A673 (cell line): ENCODE measurements at regions of chr5 and their contacts with region 1.

Region 1: GRCh38 chr5:41182666-41183065 is 30.7 kb downstream of the C6 start:
- DNase-seq: no peak
- H3K4me3 ChIP-seq: no peak overlapping the region
- H3K27ac ChIP-seq: no peak overlapping the region
- H3K4me1 ChIP-seq: peaks cover 9% of the 10 kb centered on the region
- H3K27me3 ChIP-seq: no peaks in the 10 kb centered on the region
- CTCF ChIP-seq: no peak

Region 2: GRCh38 chr5:40781843-40782409 is 400.7 kb before region 1 on chr5:
- CTCF ChIA-PET with region 1: no interaction called
- POLR2A ChIA-PET with region 1: no interaction called
- intact Hi-C with region 1: no loop called
- DNase-seq: no peak
- H3K4me3 ChIP-seq: no peak overlapping the region
- H3K27ac ChIP-seq: peak overlapping the region; percentile 21
- H3K4me1 ChIP-seq: peaks cover 26% of the 10 kb centered on the region
- H3K27me3 ChIP-seq: no peaks in the 10 kb centered on the region
- CTCF ChIP-seq: no peak

Region 3: DNA sequence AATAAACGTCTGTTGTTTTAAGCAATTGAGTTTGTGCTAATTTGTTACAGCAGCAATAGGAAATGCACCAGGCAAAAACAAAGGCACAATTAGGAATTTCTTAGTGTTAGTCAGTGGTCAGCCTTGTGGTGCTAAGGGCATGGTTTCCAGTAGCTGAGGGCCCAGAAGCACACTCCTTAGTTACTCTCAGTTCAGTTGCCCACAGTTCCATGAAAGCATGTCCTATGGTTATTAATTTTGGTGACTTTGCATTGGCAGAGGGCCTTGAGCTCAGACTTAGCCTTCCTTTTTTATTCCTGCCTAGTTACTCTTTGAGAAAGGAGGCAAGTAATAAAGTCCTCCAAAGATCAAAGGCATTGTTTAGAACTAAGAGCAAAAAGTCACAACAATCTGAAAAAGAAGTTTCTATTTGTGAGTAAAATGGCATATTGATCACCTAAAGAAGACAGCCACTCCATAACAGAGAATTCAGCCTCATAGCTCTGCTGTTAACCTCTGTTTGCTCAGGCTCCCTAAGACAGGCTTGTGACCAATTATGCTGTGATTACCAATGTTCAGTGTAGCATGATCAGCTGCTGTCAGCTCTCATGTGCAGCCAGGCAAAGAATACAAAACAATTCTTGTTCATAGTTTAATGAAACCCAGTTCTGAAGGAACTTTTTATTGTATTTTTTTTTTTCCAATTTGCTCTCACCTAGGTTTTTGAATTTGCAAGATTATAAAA is 54.5 kb before region 1 on chr5:
- CTCF ChIA-PET with region 1: no interaction called
- POLR2A ChIA-PET with region 1: interaction called, 12 read pairs
- intact Hi-C with region 1: no loop called
- DNase-seq: no peak
- H3K4me3 ChIP-seq: no peak overlapping the region
- H3K27ac ChIP-seq: no peak overlapping the region
- H3K4me1 ChIP-seq: no peaks in the 10 kb centered on the region
- H3K27me3 ChIP-seq: no peaks in the 10 kb centered on the region
- CTCF ChIP-seq: no peak

Region 4: DNA sequence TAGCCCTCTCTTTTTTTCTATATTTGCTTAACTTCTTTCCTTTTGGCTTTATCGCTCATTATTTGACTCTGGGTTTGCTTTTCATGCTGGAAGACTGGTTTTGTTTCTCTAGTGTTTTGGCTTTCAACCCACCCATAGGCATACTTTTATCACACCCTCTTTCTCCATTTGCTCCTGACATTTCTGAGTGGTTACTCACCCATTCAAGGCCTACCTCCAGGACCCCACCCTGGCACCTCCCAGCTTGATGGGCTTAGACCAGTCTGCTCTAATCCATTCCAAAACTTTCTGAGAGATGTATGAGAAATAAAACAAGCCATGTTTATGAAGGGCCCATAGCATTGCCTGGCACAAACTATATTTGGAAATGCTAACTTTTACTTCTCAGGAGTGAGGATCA is 12.6 kb after region 1 on chr5:
- CTCF ChIA-PET with region 1: no interaction called
- POLR2A ChIA-PET with region 1: no interaction called
- intact Hi-C with region 1: no loop called
- DNase-seq: no peak
- H3K4me3 ChIP-seq: no peak overlapping the region
- H3K27ac ChIP-seq: no peak overlapping the region
- H3K4me1 ChIP-seq: no peaks in the 10 kb centered on the region
- H3K27me3 ChIP-seq: no peaks in the 10 kb centered on the region
- CTCF ChIP-seq: no peak